MCF 10A (cell line): ENCODE measurements at regions of chr7 and their contacts with region 1.

Region 1: DNA sequence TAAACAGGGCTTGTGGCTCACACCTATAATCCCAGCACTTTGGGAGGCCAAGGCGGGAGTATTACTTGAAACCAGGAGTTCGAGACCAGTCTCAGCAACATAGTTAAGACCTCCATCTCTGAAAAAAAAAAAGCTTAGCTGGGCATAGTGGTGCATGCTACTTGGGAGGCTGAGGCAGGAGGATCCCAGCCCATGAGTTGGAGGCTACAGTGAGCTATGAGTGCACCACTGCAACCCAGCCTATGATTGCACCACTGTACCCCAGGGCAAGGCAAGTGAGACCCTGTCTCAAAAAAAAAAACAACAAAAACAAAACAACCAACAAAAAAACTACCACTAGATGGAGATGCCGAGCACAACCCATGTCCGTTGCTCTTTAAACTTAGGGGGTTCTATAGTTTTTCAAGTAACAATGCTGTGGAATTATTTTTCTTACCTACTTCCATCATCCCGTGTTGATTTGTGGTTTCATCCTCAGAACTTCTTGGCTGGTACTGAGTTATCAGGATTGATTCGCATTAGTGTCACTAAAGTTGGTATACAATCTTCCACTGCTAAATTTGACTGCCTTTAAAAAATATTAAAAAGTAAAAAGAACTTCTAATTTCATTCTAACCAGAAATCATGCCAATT is 12.2 kb upstream of the REPIN1 start:
- DNase-seq: peak; percentile 41
- H3K4me3 Mint-ChIP-seq: no peak overlapping the region
- H3K27ac Mint-ChIP-seq: no peak overlapping the region
- H3K4me1 Mint-ChIP-seq: no peaks in the 10 kb centered on the region
- H3K27me3 Mint-ChIP-seq: no peaks in the 10 kb centered on the region
- CTCF ChIP-seq: peak; percentile 67

Region 2: DNA sequence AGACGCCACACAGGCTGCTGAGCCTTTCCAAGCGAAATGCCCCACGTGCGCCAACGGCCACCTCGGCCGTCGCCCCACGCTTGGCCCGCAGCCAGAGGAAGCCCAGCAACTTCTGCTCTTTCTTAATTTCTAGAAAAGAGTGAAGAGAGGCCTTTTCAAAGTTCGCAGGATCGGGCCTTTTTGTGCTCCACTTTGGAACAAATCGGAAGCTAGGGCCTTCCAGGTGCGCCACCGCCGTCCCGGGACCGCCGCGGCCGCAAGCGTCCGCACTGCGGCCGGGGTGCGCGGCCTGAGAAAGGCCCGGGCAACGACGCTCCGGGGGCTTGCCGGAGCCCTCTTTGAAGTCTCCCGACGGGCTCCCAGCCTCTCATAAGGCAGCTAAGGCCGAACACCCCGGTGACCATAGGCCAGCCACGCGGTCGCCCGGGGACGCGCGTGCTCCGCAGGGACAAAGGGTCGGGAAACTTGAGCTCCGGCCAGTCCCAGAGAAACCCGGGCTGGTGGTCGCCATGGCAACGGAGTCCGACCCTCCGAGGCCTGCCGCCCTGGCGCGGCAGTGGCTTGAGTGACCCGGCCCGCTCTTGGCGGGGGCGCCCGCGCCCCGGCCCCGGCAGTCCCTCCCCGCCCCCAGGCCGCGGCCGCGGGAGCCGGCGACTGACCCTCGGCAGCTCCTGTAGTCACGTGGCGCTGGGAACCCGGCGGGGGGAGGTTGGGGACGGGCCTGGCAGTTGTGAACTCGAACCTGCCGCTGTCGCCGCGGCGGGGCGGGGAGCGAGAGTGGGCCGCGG is 11.9 kb after region 1 on chr7 and contains the start of gene REPIN1:
- CTCF ChIA-PET with region 1: interaction called, 18 read pairs
- POLR2A ChIA-PET with region 1: interaction called, 4 read pairs
- intact Hi-C with region 1: no loop called
- DNase-seq: peak; percentile 84
- H3K4me3 Mint-ChIP-seq: peak within 1 kb of the TSS; percentile 90
- H3K27ac Mint-ChIP-seq: peak within 1 kb of the TSS; percentile 89
- H3K4me1 Mint-ChIP-seq: no peaks in the 10 kb centered on the region
- H3K27me3 Mint-ChIP-seq: no peaks in the 10 kb centered on the region
- CTCF ChIP-seq: no peak
- total RNA-seq, gene REPIN1: 80.8 and 83.0 TPM in 2 replicates

Region 3: GRCh38 chr7:150420987-150421674 is 64.8 kb after region 1 on chr7:
- CTCF ChIA-PET with region 1: interaction called, 11 read pairs
- POLR2A ChIA-PET with region 1: no interaction called
- intact Hi-C with region 1: loop called (anchors 1 kb)
- DNase-seq: peak; percentile 83
- H3K4me3 Mint-ChIP-seq: no peak overlapping the region
- H3K27ac Mint-ChIP-seq: no peak overlapping the region
- H3K4me1 Mint-ChIP-seq: peaks cover 7% of the 10 kb centered on the region
- H3K27me3 Mint-ChIP-seq: no peaks in the 10 kb centered on the region
- CTCF ChIP-seq: peak; percentile 91

Region 4: GRCh38 chr7:150538259-150538658 is 181.9 kb after region 1 on chr7:
- CTCF ChIA-PET with region 1: no interaction called
- POLR2A ChIA-PET with region 1: no interaction called
- intact Hi-C with region 1: no loop called
- DNase-seq: no peak
- H3K4me3 Mint-ChIP-seq: no peak overlapping the region
- H3K27ac Mint-ChIP-seq: no peak overlapping the region
- H3K4me1 Mint-ChIP-seq: no peaks in the 10 kb centered on the region
- H3K27me3 Mint-ChIP-seq: no peaks in the 10 kb centered on the region
- CTCF ChIP-seq: no peak